Calu3 (cell line): ENCODE measurements at regions of chr20 and their contacts with region 1.

Region 1: GRCh38 chr20:46132705-46133120 is 14.6 kb downstream of the CD40 start:
- DNase-seq: peak; percentile 86
- H3K4me3 Mint-ChIP-seq: no peak overlapping the region
- H3K27ac Mint-ChIP-seq: no peak overlapping the region
- H3K4me1 Mint-ChIP-seq: no peaks in the 10 kb centered on the region
- H3K27me3 Mint-ChIP-seq: peaks cover 100% of the 10 kb centered on the region
- CTCF ChIP-seq: peak; percentile 94

Region 2: GRCh38 chr20:46004889-46005473 is 127.7 kb before region 1 on chr20:
- CTCF ChIA-PET with region 1: interaction called, 12 read pairs
- intact Hi-C with region 1: no loop called
- DNase-seq: no peak
- H3K4me3 Mint-ChIP-seq: no peak overlapping the region
- H3K27ac Mint-ChIP-seq: no peak overlapping the region
- H3K4me1 Mint-ChIP-seq: peaks cover under 1% of the 10 kb centered on the region
- H3K27me3 Mint-ChIP-seq: peaks cover 80% of the 10 kb centered on the region
- CTCF ChIP-seq: no peak

Region 3: DNA sequence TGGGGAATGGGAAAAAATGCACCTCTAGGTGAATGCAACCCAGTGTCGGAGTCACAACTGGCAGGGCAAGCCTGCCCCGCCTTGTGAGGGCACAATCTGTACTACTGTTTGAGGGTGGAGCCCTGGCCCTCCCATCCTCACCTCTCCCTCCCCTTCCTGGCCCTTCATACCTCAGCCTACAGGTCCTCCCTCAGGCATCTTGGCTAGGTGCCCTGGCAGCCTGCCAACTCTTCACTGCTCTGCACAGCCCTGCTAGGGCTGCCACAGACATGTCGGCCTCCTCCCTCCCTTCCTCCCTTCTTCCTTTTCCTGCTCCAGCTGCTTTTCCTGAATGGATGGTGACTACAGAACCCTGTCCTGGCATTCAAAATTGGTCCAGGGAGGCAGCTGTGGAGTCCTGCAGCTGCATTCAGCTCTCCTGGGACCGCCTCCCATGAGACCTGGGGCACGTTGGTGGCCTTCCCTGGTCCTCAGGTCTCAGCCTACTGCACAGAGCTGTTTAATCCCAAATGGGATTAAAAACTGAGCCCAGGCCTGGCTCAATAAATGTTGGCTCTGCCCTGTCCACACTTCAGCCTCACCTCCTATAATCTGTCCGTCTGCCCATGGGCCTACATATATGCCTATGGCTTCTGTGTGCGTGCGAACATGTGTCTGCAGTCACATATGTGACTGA is 122.9 kb after region 1 on chr20:
- CTCF ChIA-PET with region 1: no interaction called
- intact Hi-C with region 1: loop called (anchors 10 kb)
- DNase-seq: peak; percentile 99
- H3K4me3 Mint-ChIP-seq: no peak overlapping the region
- H3K27ac Mint-ChIP-seq: no peak overlapping the region
- H3K4me1 Mint-ChIP-seq: peaks cover 9% of the 10 kb centered on the region
- H3K27me3 Mint-ChIP-seq: no peaks in the 10 kb centered on the region
- CTCF ChIP-seq: no peak

Region 4: GRCh38 chr20:46316984-46317684 is 184.4 kb after region 1 on chr20:
- CTCF ChIA-PET with region 1: interaction called, 6 read pairs
- intact Hi-C with region 1: loop called (anchors 2 kb)
- DNase-seq: no peak
- H3K4me3 Mint-ChIP-seq: no peak overlapping the region
- H3K27ac Mint-ChIP-seq: no peak overlapping the region
- H3K4me1 Mint-ChIP-seq: no peaks in the 10 kb centered on the region
- H3K27me3 Mint-ChIP-seq: peaks cover 99% of the 10 kb centered on the region
- CTCF ChIP-seq: no peak

Region 5: DNA sequence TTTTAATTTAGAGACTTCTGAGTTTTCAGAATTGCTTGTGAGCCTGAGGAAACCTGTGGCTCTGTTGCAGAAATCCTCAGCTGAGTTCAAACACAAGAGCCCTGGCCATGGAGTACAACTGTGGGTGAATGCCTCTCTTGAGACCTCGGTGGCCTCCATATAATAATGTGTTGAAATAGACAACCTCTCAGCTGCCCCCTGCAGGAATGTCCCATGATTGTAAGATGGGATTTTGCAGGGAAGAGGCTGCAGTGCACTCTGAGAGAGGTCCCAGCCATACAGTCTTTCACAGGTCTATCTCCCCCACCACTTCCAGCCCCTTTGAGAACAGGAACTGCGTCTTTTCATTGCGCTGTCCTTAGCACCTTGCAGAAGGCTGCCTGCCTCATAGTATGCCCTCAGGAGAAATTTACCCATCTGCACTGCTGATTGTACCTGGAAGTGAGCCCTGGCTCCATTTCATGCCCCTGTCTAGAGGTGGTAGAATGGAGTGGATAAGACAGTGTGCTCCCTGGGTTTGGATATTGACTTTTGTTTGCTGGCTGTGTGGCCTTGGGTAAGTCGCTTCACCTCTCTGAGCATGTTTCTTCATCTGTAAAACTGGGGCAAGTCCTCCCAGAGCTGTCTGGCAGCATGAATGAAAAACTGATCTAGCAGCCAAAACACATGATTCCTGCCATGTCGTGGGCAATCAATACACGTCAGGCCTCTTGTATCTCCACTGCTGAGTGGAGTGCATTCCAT is 192.4 kb after region 1 on chr20:
- CTCF ChIA-PET with region 1: interaction called, 5 read pairs
- intact Hi-C with region 1: loop called (anchors 1 kb)
- DNase-seq: peak; percentile 70
- H3K4me3 Mint-ChIP-seq: no peak overlapping the region
- H3K27ac Mint-ChIP-seq: no peak overlapping the region
- H3K4me1 Mint-ChIP-seq: no peaks in the 10 kb centered on the region
- H3K27me3 Mint-ChIP-seq: peaks cover 100% of the 10 kb centered on the region
- CTCF ChIP-seq: peak; percentile 71

Region 6: GRCh38 chr20:46349035-46349741 is 216.5 kb after region 1 on chr20:
- CTCF ChIA-PET with region 1: interaction called, 13 read pairs
- intact Hi-C with region 1: loop called (anchors 2 kb)
- DNase-seq: peak; percentile 74
- H3K4me3 Mint-ChIP-seq: no peak overlapping the region
- H3K27ac Mint-ChIP-seq: no peak overlapping the region
- H3K4me1 Mint-ChIP-seq: peaks cover 13% of the 10 kb centered on the region
- H3K27me3 Mint-ChIP-seq: peaks cover 14% of the 10 kb centered on the region
- CTCF ChIP-seq: peak; percentile 90

Region 7: GRCh38 chr20:46438156-46438750 is 305.5 kb after region 1 on chr20:
- CTCF ChIA-PET with region 1: interaction called, 22 read pairs
- intact Hi-C with region 1: loop called (anchors 1 kb)
- DNase-seq: peak; percentile 49
- H3K4me3 Mint-ChIP-seq: no peak overlapping the region
- H3K27ac Mint-ChIP-seq: no peak overlapping the region
- H3K4me1 Mint-ChIP-seq: no peaks in the 10 kb centered on the region
- H3K27me3 Mint-ChIP-seq: peaks cover 89% of the 10 kb centered on the region
- CTCF ChIP-seq: peak; percentile 38